ENCODE measurements at regions of chr18 and their contacts with region 1.

Region 1: DNA sequence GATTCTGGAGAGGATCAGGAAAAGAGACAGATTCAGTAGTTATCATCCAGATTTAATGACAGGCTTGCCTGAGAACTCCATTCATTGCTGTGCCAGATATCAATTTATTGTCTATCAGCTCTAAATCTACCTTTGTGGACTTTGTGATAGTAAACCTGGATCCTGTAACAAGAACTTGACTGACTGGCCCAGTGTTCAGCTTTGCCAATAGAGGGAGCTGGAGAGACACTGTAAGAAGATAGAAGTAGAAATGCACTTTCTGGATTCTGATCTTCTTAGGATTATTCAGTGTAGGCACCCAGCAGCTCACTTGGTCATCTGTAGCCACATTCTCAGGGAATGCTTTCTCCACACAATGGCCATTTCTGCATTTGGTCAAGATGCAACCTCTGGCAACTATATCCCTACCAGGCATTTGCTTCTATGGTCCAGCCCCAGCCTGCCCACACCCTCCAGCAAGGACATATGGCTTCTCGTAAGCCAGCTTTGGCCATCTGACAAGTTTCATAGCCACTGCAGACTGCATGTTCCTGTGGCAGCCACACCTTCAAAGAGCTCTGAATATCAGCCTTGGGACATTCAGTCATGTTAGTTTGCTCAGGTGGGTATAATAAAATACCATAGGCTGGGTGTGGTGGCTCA is 6.1 kb upstream of the SERPINB8 start:
- DNase-seq: peak; percentile 30 to 37
- H3K4me3 ChIP-seq: no peak overlapping the region
- H3K4me3 Mint-ChIP-seq: no peak overlapping the region
- H3K27ac Mint-ChIP-seq: no peak overlapping the region
- H3K4me1 ChIP-seq: no peaks in the 10 kb centered on the region
- H3K4me1 Mint-ChIP-seq: no peaks in the 10 kb centered on the region
- H3K27me3 ChIP-seq: no peaks in the 10 kb centered on the region
- H3K27me3 Mint-ChIP-seq: peaks cover 7% of the 10 kb centered on the region
- CTCF ChIP-seq: peak; percentile 31 to 61

Region 2: GRCh38 chr18:63783394-63783793 is 180.3 kb before region 1 on chr18:
- CTCF ChIA-PET with region 1: no interaction called
- POLR2A ChIA-PET with region 1: no interaction called
- intact Hi-C with region 1: no loop called
- DNase-seq: peak in 1 of 2 experiments; percentile 1
- H3K4me3 ChIP-seq: no peak overlapping the region
- H3K4me3 Mint-ChIP-seq: no peak overlapping the region
- H3K27ac Mint-ChIP-seq: no peak overlapping the region
- H3K4me1 ChIP-seq: no peaks in the 10 kb centered on the region
- H3K4me1 Mint-ChIP-seq: no peaks in the 10 kb centered on the region
- H3K27me3 ChIP-seq: no peaks in the 10 kb centered on the region
- H3K27me3 Mint-ChIP-seq: no peaks in the 10 kb centered on the region
- CTCF ChIP-seq: no peak

Region 3: DNA sequence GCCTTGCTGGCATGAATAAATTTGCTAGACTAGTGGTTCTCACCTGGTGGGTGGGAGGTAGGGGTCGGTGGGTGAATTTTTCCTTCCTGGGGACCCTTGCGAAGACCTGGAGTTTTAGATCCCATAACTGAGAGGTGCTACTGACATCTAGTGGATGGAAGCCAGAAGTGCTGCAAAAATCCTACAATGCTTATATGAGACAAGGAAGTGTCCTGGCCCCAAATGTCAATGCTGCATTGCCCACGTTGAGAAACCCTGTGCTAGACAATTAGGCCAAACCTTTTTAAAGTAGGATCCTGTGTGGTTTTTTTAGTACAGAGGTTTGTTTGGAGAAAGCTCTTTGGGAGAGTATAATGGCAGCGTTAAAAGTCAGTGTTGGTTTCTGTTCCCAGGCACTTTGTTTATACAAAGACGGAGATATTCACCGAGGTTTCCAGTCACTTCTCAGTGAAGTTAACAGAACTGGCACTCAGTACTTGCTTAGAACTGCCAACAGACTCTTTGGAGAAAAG is 15.7 kb after region 1 on chr18:
- CTCF ChIA-PET with region 1: no interaction called
- POLR2A ChIA-PET with region 1: no interaction called
- intact Hi-C with region 1: loop called (anchors 1 kb)
- DNase-seq: peak; percentile 47 to 48
- H3K4me3 ChIP-seq: no peak overlapping the region
- H3K4me3 Mint-ChIP-seq: no peak overlapping the region
- H3K27ac Mint-ChIP-seq: no peak overlapping the region
- H3K4me1 ChIP-seq: no peaks in the 10 kb centered on the region
- H3K4me1 Mint-ChIP-seq: no peaks in the 10 kb centered on the region
- H3K27me3 ChIP-seq: no peaks in the 10 kb centered on the region
- H3K27me3 Mint-ChIP-seq: no peaks in the 10 kb centered on the region
- CTCF ChIP-seq: peak; percentile 47 to 63

Region 4: DNA sequence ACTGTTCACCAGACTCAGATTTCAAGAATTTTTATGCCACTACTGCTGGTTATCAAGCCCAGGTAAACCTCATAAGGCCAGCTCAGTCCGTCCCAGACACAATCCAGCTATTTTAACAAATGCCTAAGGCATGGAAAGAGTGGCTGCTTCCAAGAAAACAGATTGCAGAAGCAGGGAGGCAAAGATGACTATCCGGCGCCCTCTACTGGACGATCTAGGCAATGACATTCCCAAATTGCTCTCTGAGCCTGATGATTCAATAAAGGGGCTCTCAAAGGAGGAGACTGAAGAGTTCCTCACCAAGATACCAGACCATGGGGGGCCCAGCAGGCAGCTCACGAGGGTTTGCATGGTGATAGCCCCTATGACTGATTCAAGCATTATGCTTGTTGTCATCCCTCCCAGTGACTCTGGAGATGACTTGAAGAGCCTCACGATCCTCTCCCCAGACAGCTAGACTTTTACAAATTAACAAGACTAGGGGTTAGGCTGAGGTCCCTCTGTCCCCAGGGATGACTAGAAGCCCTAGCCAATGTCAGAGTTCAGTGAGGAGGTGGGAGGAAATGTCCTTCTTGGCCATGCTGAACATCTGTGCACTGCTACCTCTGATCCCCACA is 31.2 kb after region 1 on chr18:
- CTCF ChIA-PET with region 1: interaction called, 5 read pairs
- POLR2A ChIA-PET with region 1: no interaction called
- intact Hi-C with region 1: loop called (anchors 1 kb)
- DNase-seq: peak in 1 of 2 experiments; percentile 30
- H3K4me3 ChIP-seq: no peak overlapping the region
- H3K4me3 Mint-ChIP-seq: no peak overlapping the region
- H3K27ac Mint-ChIP-seq: no peak overlapping the region
- H3K4me1 ChIP-seq: no peaks in the 10 kb centered on the region
- H3K4me1 Mint-ChIP-seq: no peaks in the 10 kb centered on the region
- H3K27me3 ChIP-seq: no peaks in the 10 kb centered on the region
- H3K27me3 Mint-ChIP-seq: no peaks in the 10 kb centered on the region
- CTCF ChIP-seq: peak; percentile 45 to 54

Region 5: DNA sequence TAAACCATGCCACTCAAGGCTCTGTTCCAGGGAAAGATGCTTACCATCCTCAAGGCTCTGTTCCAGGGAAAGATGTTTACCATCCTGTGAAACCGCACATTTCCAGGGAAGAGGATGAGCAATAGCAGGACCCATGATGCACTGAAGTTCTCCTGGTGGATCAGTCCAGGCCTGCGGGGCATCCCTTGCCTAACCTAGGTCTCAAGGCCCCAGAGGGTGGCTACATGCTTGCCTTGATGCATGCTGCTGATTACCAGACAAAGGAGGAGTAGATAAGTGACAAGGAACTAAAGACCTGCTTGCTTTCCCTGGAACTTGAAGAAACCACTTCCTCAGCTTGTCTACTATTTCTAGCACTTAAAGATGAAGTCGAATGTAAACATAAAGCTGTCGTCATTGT is 296.1 kb after region 1 on chr18:
- CTCF ChIA-PET with region 1: no interaction called
- POLR2A ChIA-PET with region 1: no interaction called
- intact Hi-C with region 1: no loop called
- DNase-seq: peak in 1 of 2 experiments; percentile 30
- H3K4me3 ChIP-seq: no peak overlapping the region
- H3K4me3 Mint-ChIP-seq: no peak overlapping the region
- H3K27ac Mint-ChIP-seq: no peak overlapping the region
- H3K4me1 ChIP-seq: no peaks in the 10 kb centered on the region; the same call in 1 of the 2 replicates
- H3K4me1 Mint-ChIP-seq: peaks cover 12% of the 10 kb centered on the region
- H3K27me3 ChIP-seq: no peaks in the 10 kb centered on the region
- H3K27me3 Mint-ChIP-seq: no peaks in the 10 kb centered on the region
- CTCF ChIP-seq: no peak